ENCODE measurements at regions of chr10 and their contacts with region 1.

Region 1: DNA sequence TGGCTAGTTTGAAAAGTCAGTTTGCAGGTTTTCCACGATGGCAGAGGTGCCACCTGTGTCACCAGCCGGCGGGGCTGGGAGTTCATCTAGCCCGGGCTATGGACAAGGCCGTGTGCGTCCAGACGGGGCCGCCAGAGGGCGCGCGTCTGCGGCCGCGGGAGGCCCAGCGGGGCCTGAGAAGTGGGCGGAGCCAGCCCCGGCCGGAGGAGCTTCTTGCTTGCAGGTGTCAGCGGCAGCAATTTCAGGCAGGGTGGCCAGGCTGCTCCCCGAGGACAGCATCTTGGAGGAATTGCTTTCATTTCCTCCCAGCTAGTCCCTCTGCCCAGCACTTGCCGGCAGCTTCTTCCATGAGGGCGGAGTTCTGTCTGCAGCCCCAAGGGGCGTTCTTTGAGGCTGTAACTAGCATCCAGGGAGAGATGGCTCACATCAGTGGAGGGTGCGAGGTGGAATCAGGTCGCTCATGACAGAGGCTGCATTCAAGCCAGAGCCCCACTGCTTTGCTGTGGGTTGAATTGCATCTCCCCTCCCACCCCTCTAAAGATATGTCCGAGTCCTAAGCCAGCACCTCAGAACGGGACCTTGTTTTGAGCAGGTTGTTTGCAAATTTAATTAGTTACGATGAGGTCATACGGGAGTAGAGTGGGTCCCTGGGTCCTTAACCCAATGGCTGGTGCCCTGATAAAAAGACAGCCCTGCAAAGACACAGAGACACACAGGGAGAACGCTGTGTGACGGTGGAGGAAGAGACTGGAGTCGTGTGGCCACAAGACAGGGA is 85.9 kb upstream of the MKI67 start:
- DNase-seq: peak; percentile 87
- H3K4me3 Mint-ChIP-seq: peak overlapping the region; percentile 73
- H3K27ac Mint-ChIP-seq: peak overlapping the region; percentile 74
- H3K4me1 Mint-ChIP-seq: peaks cover 20% of the 10 kb centered on the region
- H3K27me3 Mint-ChIP-seq: peaks cover 1% of the 10 kb centered on the region

Region 2: GRCh38 chr10:128186959-128187787 is 25.0 kb before region 1 on chr10:
- CTCF ChIA-PET with region 1: interaction called, 205 read pairs
- POLR2A ChIA-PET with region 1: interaction called, 21 read pairs
- DNase-seq: peak; percentile 52
- H3K4me3 Mint-ChIP-seq: peak overlapping the region; percentile 58
- H3K27ac Mint-ChIP-seq: peak overlapping the region; percentile 61
- H3K4me1 Mint-ChIP-seq: peaks cover 44% of the 10 kb centered on the region
- H3K27me3 Mint-ChIP-seq: peaks cover 8% of the 10 kb centered on the region

Region 3: GRCh38 chr10:128222332-128222849 is 10.3 kb after region 1 on chr10:
- CTCF ChIA-PET with region 1: interaction called, 13 read pairs
- POLR2A ChIA-PET with region 1: no interaction called
- DNase-seq: no peak
- H3K4me3 Mint-ChIP-seq: no peak overlapping the region
- H3K27ac Mint-ChIP-seq: no peak overlapping the region
- H3K4me1 Mint-ChIP-seq: peaks cover 8% of the 10 kb centered on the region
- H3K27me3 Mint-ChIP-seq: peaks cover 37% of the 10 kb centered on the region